K562 (cell line): ENCODE measurements at regions of chr14 and their contacts with region 1.

Region 1: GRCh38 chr14:55180434-55180833 is 11.0 kb downstream of the DLGAP5 start:
- DNase-seq: no peak
- ATAC-seq: no peak
- H3K4me3 ChIP-seq: no peak overlapping the region
- H3K27ac ChIP-seq: no peak overlapping the region
- H3K4me1 ChIP-seq: no peaks in the 10 kb centered on the region
- H3K27me3 ChIP-seq: no peaks in the 10 kb centered on the region
- CTCF ChIP-seq: no peak
- EP300 ChIP-seq: no peak
- POLR2A ChIP-seq: no peak
- RAD21 ChIP-seq: no peak

Region 2: GRCh38 chr14:54772451-54772881 is 408.0 kb before region 1 on chr14:
- CTCF ChIA-PET with region 1: no interaction called
- POLR2A ChIA-PET with region 1: no interaction called
- in situ Hi-C with region 1: no loop called
- intact Hi-C with region 1: no loop called
- DNase-seq: no peak
- ATAC-seq: no peak
- H3K4me3 ChIP-seq: peak overlapping the region; percentile 6; the same call in 1 of the 2 replicates
- H3K27ac ChIP-seq: peak overlapping the region; percentile 86
- H3K4me1 ChIP-seq: peaks cover 19 to 23% of the 10 kb centered on the region in 2 experiments; a peak in 4 of 5 replicates
- H3K27me3 ChIP-seq: no peaks in the 10 kb centered on the region
- CTCF ChIP-seq: no peak
- EP300 ChIP-seq: no peak
- POLR2A ChIP-seq: no peak
- RAD21 ChIP-seq: no peak

Region 3: GRCh38 chr14:55070981-55071411 is 109.4 kb before region 1 on chr14:
- CTCF ChIA-PET with region 1: no interaction called
- POLR2A ChIA-PET with region 1: no interaction called
- in situ Hi-C with region 1: no loop called
- intact Hi-C with region 1: no loop called
- DNase-seq: no peak
- ATAC-seq: no peak
- H3K4me3 ChIP-seq: no peak overlapping the region
- H3K27ac ChIP-seq: no peak overlapping the region
- H3K4me1 ChIP-seq: peaks cover 4 to 13% of the 10 kb centered on the region in 2 experiments; a peak in 1 of 5 replicates
- H3K27me3 ChIP-seq: no peaks in the 10 kb centered on the region
- CTCF ChIP-seq: no peak
- EP300 ChIP-seq: no peak
- POLR2A ChIP-seq: no peak
- RAD21 ChIP-seq: no peak

Region 4: DNA sequence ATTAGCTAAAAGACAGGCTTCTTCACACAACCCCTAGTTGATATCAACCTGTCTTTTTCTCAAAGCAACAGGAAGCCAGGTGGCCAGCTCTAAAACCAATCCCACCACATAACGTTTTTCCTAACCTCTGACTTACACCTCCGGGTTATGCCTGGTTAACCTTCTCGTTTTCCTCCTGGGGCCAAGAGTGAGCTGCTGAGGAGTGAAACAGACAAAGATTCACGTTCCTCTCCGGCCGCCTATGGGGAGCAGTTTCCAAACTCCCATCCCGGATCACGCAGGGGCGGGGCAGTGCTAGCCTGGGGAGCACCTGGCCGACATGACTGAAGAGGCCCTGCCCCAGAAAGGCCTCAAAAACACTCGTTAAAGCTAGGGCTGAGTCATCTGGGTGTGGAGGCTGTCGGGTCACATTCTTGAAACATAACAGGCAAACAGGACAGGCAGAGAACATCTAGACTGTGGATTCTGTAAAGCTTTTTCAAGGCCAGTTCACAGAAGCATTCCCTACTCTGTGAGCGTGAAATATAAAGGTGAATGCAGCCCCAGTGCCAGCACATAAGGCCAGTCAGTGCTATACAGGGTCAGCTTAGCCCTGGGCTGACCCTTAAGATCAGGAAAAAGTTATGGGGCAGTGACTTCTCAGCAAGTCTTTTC is 77.3 kb before region 1 on chr14:
- CTCF ChIA-PET with region 1: no interaction called
- POLR2A ChIA-PET with region 1: no interaction called
- in situ Hi-C with region 1: no loop called
- intact Hi-C with region 1: no loop called
- DNase-seq: peak; percentile 78 to 91 (median 81)
- ATAC-seq: peak; percentile 95
- H3K4me3 ChIP-seq: peak overlapping the region; percentile 18; the same call in 1 of the 2 replicates
- H3K27ac ChIP-seq: peak overlapping the region; percentile 99
- H3K4me1 ChIP-seq: peaks cover 9 to 41% of the 10 kb centered on the region in 2 experiments
- H3K27me3 ChIP-seq: no peaks in the 10 kb centered on the region
- CTCF ChIP-seq: no peak
- EP300 ChIP-seq: peak; percentile 44; the same call in 1 of the 2 replicates
- POLR2A ChIP-seq: peak; percentile 70
- RAD21 ChIP-seq: no peak

Region 5: DNA sequence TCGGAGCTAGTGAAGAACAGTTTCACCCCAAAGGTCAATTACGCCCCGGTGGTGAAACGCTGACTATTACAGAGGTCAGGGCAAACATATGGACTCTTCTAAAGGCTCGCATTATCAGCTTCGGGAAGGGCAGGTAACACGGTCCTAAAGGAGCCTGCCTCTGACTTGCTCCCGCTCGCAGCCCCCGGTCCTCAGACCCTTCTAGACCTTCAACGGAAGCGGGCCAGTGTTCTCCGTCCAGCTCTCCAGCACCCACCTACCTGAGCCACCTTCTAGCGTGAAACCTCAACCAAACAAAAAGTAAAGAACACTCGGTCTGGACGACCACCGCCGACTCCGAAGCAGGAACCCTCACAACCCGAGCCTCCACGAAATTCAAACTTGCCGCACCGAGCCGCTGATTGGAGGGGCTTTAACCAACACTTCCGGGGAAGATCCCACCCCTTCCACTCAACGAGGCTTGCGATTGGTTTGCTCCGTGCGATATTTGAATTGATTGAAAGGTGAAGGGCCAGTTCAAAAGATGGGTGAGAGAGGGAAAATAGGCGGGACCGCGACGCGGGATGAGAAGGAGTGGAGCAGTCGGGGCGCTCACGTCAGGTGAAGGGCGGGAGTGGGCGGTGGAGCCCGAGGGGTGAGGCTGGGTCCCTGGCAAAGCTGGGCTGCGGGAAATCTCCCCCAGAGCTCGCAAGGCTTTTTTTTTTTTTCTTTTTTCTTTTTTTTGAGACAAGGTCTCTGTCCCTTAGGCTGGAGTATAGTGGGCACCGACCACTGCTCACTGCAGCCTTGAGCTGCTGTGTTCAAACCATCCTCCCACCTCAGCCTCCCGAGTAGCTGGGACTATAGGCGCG is 11.0 kb after region 1 on chr14 and contains the start of gene DLGAP5:
- CTCF ChIA-PET with region 1: no interaction called
- POLR2A ChIA-PET with region 1: interaction called, 10 read pairs
- in situ Hi-C with region 1: no loop called
- intact Hi-C with region 1: no loop called
- DNase-seq: peak; percentile 87 to 95 (median 91)
- ATAC-seq: peak; percentile 96
- H3K4me3 ChIP-seq: peak within 1 kb of the TSS; percentile 77
- H3K27ac ChIP-seq: peak within 1 kb of the TSS; percentile 91
- H3K4me1 ChIP-seq: peaks cover 4 to 5% of the 10 kb centered on the region in 2 experiments; a peak in 2 of 5 replicates
- H3K27me3 ChIP-seq: no peaks in the 10 kb centered on the region
- CTCF ChIP-seq: no peak
- EP300 ChIP-seq: no peak
- POLR2A ChIP-seq: peak; percentile 88
- RAD21 ChIP-seq: no peak
- polyA plus RNA-seq, gene DLGAP5: 49.6 to 72.4 TPM

Region 6: GRCh38 chr14:55673048-55673447 is 492.6 kb after region 1 on chr14:
- CTCF ChIA-PET with region 1: no interaction called
- POLR2A ChIA-PET with region 1: no interaction called
- in situ Hi-C with region 1: no loop called
- intact Hi-C with region 1: no loop called
- DNase-seq: no peak
- ATAC-seq: no peak
- H3K4me3 ChIP-seq: no peak overlapping the region
- H3K27ac ChIP-seq: no peak overlapping the region
- H3K4me1 ChIP-seq: no peaks in the 10 kb centered on the region
- H3K27me3 ChIP-seq: no peaks in the 10 kb centered on the region
- CTCF ChIP-seq: no peak
- EP300 ChIP-seq: no peak
- POLR2A ChIP-seq: no peak
- RAD21 ChIP-seq: no peak